Panc1 (cell line): ENCODE measurements at regions of chr1 and their contacts with region 1.

Region 1: DNA sequence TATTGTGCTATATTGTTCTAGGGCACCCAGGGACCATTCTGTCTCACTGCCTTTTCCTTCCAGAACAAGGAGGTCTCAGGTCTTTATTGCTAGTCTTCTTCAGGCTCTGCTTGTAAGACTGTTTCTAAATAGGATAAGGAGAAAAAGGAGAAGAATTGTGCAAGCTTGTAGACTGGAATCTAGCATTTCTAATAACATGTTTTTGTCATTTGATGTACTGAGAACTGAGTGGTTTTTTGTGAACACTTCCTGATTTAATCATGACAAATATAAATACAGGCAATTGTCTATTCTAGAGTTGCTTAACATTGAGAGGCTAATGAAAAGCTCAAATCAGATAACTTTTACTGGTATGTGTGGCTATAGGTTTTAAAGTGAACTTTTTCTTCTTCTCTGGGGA is 77.6 kb downstream of the CLIC4 start:
- DNase-seq: no peak
- ATAC-seq: no peak
- H3K4me3 ChIP-seq: no peak overlapping the region
- H3K27ac ChIP-seq: no peak overlapping the region
- H3K4me1 ChIP-seq: no peaks in the 10 kb centered on the region
- H3K27me3 ChIP-seq: no peaks in the 10 kb centered on the region
- CTCF ChIP-seq: no peak

Region 2: DNA sequence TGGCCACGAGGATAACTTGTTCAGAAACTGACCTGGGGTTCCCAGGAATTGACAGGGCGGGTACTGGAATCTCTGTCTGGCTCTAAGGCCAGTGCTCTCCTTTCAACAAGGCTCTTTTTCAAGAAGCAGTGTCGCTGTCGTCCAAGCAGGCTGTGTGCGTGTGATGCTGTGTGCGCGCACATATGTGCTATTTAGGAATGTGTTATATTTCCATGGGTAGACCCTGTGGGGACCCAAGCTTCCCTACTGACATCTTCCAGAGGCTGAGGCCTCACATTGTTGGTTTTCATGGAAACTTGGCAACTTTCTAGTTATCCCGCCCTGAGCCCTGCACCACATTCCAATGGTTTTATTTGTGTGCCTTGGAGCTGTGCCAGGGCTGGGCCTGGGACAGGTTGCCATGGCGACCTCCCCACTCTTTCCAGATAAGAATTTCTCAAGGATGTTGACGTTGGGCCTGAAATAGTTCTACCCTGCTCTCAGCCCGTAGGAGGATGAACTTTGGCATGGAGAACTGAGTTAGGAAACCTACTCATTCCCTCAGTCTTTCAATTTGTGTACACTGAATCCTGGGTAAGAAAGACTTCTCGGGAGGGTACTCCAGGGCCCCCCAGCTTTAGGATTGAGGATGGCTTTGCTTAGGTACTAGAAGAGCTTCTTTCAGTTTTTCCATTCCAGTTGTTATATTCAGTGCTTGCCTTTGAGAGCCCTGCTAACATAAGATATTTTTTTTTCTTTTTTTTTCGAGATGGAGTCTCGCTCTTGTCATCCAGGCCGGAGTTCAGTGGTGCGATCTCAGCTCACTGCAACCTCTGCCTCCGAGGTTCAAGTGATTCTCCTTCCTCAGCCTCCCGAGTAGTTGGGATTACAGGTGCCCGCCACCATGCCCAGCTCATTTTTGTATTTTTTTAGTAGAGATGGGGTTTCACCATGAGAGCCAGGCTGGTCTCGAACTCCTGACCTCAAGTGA is 804.0 kb before region 1 on chr1:
- CTCF ChIA-PET with region 1: no interaction called
- POLR2A ChIA-PET with region 1: no interaction called
- in situ Hi-C with region 1: no loop called
- intact Hi-C with region 1: no loop called
- DNase-seq: peak; percentile 87
- ATAC-seq: peak; percentile 89
- H3K4me3 ChIP-seq: peak overlapping the region in 1 of 2 experiments; percentile 25; a peak in 2 of 4 replicates
- H3K27ac ChIP-seq: peak overlapping the region; percentile 87
- H3K4me1 ChIP-seq: peaks cover 67% of the 10 kb centered on the region
- H3K27me3 ChIP-seq: no peaks in the 10 kb centered on the region
- CTCF ChIP-seq: no peak

Region 3: DNA sequence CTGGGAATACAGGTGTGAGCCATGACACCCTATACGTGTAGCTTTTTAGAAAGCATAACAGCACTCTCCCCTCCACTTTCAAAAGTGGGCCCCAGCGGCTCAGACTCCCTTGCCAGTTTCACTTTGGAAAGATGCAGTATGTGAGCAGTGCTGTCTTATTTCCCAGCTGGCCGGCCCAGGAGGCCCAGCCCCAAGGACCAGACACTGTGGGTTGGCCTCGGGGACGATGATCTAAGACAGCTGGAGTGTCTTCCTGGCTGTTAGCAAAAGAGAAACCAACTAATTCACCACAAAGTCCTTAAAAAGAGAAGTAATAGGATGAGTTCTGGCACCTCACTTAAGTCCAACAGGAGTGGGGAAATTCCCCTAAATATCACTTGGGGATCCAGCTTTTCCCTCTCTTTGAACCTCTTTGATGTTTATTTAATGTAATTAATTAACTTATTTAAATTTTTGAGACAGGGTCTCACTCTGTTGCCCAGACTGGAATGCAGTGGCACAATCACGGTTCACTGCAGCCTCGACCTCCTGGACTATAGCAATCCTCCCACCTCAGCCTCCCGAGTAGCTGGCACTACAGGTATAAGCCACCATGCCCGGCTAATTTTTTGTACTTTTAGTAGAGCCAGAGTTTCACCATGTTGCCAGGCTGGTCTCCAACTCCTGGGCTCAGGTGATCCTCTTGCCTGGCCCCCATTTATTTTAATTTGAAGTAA is 95.2 kb before region 1 on chr1:
- CTCF ChIA-PET with region 1: interaction called, 10 read pairs
- POLR2A ChIA-PET with region 1: interaction called, 11 read pairs
- in situ Hi-C with region 1: no loop called
- intact Hi-C with region 1: no loop called
- DNase-seq: no peak
- ATAC-seq: peak; percentile 35; the same call in 1 of the 2 replicates
- H3K4me3 ChIP-seq: no peak overlapping the region
- H3K27ac ChIP-seq: 0 out of 2 replicates have a peak overlapping the region, but pooled peaks have one; percentile 14
- H3K4me1 ChIP-seq: peaks cover 24% of the 10 kb centered on the region
- H3K27me3 ChIP-seq: no peaks in the 10 kb centered on the region
- CTCF ChIP-seq: no peak

Region 4: DNA sequence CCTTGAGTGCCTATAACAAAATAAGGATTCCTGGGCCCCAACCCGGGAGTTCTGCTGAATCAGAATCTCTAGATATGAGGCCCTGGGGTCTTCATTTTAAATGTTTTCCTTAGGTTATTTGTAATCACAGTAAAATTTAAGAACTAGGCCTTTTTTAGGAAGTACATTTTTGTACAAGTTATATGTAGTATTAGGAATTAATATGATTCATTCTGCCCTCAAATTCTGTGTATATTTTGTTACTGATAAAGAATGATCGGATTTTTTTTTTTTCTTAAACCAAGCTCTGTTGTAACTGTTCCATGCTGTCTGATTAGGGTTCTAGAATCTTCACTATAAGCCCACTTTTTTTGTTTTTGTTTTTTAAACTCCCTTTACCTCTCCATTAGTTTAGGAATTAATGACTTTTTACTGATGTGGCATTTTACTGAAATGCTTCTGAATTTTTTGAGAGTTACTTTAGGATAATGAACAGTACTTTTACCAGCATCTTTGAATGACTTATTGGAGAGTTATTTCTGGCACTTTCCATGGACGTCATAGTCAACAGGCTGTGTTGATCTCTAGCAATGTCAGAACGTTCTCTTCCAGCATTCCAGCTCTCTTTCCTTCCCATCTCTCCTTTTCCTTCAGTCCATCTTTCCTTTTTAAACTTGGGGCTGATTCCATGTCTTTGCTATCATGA is 29.3 kb before region 1 on chr1:
- CTCF ChIA-PET with region 1: no interaction called
- POLR2A ChIA-PET with region 1: interaction called, 14 read pairs
- in situ Hi-C with region 1: no loop called
- intact Hi-C with region 1: no loop called
- DNase-seq: peak; percentile 4
- ATAC-seq: no peak
- H3K4me3 ChIP-seq: no peak overlapping the region
- H3K27ac ChIP-seq: no peak overlapping the region
- H3K4me1 ChIP-seq: peaks cover 2% of the 10 kb centered on the region; the same call in 1 of the 2 replicates
- H3K27me3 ChIP-seq: no peaks in the 10 kb centered on the region
- CTCF ChIP-seq: no peak

Region 5: GRCh38 chr1:25080294-25081209 is 257.7 kb after region 1 on chr1:
- CTCF ChIA-PET with region 1: no interaction called
- POLR2A ChIA-PET with region 1: no interaction called
- in situ Hi-C with region 1: no loop called
- intact Hi-C with region 1: no loop called
- DNase-seq: no peak
- ATAC-seq: no peak
- H3K4me3 ChIP-seq: no peak overlapping the region
- H3K27ac ChIP-seq: no peak overlapping the region
- H3K4me1 ChIP-seq: no peaks in the 10 kb centered on the region
- H3K27me3 ChIP-seq: no peaks in the 10 kb centered on the region
- CTCF ChIP-seq: no peak